Activated naive CD8-positive, alpha-beta T cell treated with anti-CD3 and anti-CD28 coated beads, Interleukin-2, amount 10 ng/mL, durations not matched to agents 7 days and 5 days (primary cell): ENCODE measurements at regions of chr22 and their contacts with region 1.

Region 1: DNA sequence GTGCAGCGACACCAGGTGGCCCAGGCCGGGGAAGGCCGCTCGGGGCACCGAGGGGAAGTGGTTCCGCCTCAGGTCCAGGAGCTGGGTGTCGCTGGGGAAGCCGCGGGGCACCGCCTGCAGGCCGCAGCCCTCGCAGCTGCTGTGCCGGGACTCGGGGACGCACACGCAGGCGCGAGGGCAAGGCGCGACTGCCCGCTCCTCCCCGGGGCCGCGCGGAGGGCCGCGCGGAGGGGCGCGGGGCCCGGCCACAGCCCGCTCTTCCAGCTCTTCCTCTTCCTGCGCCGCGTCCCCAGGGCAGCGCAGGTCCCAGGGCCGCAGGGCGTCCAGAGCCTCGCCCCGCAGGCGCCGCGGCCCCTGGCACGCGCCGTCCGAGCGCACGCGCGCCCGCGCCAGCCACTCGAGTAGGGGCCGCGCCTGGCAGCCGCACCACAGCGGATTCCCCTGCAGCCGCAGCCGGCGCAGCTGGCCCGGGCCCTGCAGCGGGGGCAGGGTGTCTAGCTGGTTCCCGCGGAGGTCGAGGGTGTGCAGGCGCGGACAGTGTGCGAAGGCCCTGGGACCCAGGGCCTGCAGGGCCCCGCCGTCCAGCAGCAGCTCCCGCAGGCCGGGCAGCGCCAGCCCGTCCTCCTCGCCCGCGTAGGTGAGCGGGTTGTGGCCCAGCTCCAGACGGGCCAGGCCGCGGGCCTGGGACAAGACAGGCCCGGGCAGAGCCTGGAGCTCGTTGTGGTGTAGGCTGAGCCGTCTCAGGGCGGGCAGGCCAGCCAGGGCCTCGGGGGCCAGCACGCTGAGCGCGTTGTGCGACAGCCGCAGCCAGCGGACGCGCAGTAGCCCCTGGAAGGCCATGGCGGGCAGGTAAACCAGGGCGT is 2.8 kb downstream of the CHADL start:
- DNase-seq: peak; percentile 90
- ATAC-seq: peak; percentile 95
- H3K4me3 Mint-ChIP-seq: peak overlapping the region; percentile 68
- H3K27ac Mint-ChIP-seq: no peak overlapping the region
- H3K4me1 Mint-ChIP-seq: peaks cover 5% of the 10 kb centered on the region
- H3K27me3 Mint-ChIP-seq: no peaks in the 10 kb centered on the region

Region 2: GRCh38 chr22:40922484-40923303 is 315.2 kb before region 1 on chr22:
- POLR2A ChIA-PET with region 1: interaction called, 26 read pairs
- DNase-seq: no peak
- ATAC-seq: peak; percentile 81
- H3K4me3 Mint-ChIP-seq: peak overlapping the region; percentile 47
- H3K27ac Mint-ChIP-seq: peak overlapping the region; percentile 43
- H3K4me1 Mint-ChIP-seq: peaks cover 4% of the 10 kb centered on the region
- H3K27me3 Mint-ChIP-seq: no peaks in the 10 kb centered on the region

Region 3: GRCh38 chr22:41091132-41092022 is 146.6 kb before region 1 on chr22:
- POLR2A ChIA-PET with region 1: interaction called, 12 read pairs
- DNase-seq: peak; percentile 99
- ATAC-seq: peak; percentile 81
- H3K4me3 Mint-ChIP-seq: peak overlapping the region; percentile 96
- H3K27ac Mint-ChIP-seq: peak overlapping the region; percentile 100
- H3K4me1 Mint-ChIP-seq: peaks cover 20% of the 10 kb centered on the region
- H3K27me3 Mint-ChIP-seq: no peaks in the 10 kb centered on the region

Region 4: DNA sequence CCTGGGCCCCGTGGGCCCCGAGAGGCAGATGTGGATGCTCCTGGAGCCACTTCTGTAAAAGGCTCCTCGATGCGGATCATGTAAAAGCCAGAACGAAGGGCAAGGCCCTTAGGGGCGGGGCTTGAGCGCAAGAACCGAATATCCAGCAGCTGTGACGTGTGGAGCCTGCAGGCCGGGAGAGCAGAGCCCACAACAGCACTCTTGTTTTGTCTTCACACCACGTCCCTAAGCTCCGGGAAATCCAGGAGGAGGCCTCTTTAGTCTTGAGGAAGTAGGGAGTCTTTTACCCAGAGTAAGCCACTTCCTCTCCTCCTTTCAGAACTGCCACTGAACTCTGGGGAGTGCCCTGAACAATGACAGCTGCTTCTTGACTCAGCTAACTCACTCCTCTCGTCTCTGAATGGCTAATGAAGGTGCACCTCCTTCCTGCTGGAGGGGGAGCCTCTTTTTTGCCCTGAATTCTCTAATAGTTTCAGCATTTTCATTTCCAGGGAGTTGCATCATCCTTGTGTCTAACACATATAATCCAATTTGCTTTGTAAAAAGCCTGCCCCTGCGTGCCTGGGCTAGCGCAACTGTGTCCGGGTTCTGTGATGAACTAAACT is 20.3 kb before region 1 on chr22:
- POLR2A ChIA-PET with region 1: interaction called, 10 read pairs
- DNase-seq: peak; percentile 69
- ATAC-seq: peak; percentile 99
- H3K4me3 Mint-ChIP-seq: peak overlapping the region; percentile 84
- H3K27ac Mint-ChIP-seq: peak overlapping the region; percentile 91
- H3K4me1 Mint-ChIP-seq: peaks cover 32% of the 10 kb centered on the region
- H3K27me3 Mint-ChIP-seq: no peaks in the 10 kb centered on the region

Region 5: DNA sequence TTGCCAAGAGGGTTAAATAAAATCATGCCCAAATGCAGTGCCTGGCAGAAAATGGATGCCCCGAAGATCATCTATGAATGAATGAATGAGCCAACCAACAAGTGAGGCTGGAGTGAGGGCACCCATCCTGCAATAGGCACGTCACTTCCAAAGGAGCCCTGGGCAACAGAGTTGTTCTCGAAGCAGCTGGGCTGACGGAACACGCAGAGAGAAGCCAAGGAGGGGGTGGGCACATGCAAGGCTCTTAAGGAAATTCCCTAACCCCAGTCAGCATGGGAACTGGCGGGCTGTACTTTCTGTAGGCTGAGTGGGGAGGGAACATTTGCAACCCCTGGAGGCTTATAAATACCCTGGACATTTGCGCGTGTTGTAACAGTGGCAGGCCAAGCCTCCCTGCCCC is 14.4 kb after region 1 on chr22:
- POLR2A ChIA-PET with region 1: no interaction called
- DNase-seq: no peak
- ATAC-seq: no peak
- H3K4me3 Mint-ChIP-seq: no peak overlapping the region
- H3K27ac Mint-ChIP-seq: no peak overlapping the region
- H3K4me1 Mint-ChIP-seq: no peaks in the 10 kb centered on the region
- H3K27me3 Mint-ChIP-seq: no peaks in the 10 kb centered on the region

Region 6: DNA sequence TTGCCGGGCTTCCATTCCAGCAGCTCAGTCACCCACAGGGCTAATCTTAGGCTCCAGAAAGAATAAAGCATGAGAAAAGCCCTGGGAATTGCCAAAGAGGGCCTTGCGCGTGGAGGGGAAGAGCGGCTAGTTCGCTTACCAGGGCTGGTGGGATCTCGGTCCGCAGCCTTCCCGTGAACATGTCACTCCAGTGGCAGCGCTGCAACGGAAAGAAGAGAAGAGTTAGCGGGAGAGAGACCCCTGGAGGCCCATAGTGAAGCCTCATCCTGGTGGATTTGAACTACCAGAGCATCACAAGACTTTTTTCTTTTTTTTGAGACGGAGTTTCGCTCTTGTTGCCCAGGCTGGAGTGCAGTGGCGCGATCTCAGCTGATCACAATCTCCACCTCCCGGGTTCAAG is 30.0 kb after region 1 on chr22:
- POLR2A ChIA-PET with region 1: no interaction called
- DNase-seq: no peak
- ATAC-seq: no peak
- H3K4me3 Mint-ChIP-seq: no peak overlapping the region
- H3K27ac Mint-ChIP-seq: no peak overlapping the region
- H3K4me1 Mint-ChIP-seq: no peaks in the 10 kb centered on the region
- H3K27me3 Mint-ChIP-seq: no peaks in the 10 kb centered on the region

Region 7: DNA sequence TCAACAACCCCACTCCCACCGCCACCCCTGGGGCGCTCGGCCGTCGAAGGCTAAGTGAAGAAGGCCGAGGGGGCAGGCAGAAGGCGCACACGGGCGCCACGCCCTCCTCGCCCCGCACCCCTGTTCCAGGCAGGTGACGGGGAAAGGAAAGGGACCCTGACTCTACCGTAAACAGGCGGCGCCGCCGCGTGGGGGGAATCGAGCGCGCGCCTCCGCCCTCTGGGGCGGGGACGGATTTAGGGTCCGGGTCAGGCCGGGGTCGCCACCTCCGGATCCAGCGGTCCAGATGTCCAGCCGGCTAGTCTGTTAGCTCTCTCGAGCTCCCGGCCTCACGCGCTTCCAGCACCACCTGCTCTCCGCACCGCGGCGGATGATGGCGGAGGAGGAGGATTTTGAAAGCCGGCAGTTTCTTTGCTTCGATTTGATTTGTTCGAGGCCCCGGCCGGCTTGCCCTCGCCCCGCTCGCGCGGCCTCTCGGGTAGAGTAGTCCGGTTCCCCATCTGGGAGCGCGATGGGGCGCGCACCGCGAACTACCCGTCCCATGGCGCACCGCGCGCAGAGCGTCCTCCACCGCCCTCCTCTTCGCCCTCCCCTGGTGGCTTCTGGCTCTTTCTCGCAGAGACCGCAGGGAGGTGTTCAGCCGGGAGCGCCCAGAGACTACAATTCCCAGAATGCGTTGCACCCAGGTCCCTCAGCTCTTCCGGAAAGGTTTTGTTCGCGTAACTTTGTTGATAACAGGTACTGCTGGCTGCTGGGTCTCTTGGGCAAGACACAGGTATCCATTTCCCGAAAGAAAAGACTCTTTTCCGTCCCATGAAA is 48.1 kb after region 1 on chr22 and contains the start of gene RANGAP1:
- POLR2A ChIA-PET with region 1: interaction called, 12 read pairs
- DNase-seq: peak; percentile 96
- ATAC-seq: peak; percentile 96
- H3K4me3 Mint-ChIP-seq: peak within 1 kb of the TSS; percentile 95
- H3K27ac Mint-ChIP-seq: peak within 1 kb of the TSS; percentile 96
- H3K4me1 Mint-ChIP-seq: peaks cover 18% of the 10 kb centered on the region
- H3K27me3 Mint-ChIP-seq: no peaks in the 10 kb centered on the region
- total RNA-seq, gene RANGAP1: 93.6 to 98.3 TPM

Region 8: GRCh38 chr22:41360126-41360525 is 122.2 kb after region 1 on chr22:
- POLR2A ChIA-PET with region 1: no interaction called
- DNase-seq: no peak
- ATAC-seq: no peak
- H3K4me3 Mint-ChIP-seq: no peak overlapping the region
- H3K27ac Mint-ChIP-seq: no peak overlapping the region
- H3K4me1 Mint-ChIP-seq: no peaks in the 10 kb centered on the region
- H3K27me3 Mint-ChIP-seq: no peaks in the 10 kb centered on the region